CD8-positive, alpha-beta T cell (primary cell): ENCODE measurements at regions of chr10 and their contacts with region 1.

Region 1: GRCh38 chr10:14556285-14556956 is 218.3 kb downstream of the FAM107B start:
- DNase-seq: peak in 4 of 9 experiments; percentile 5 to 76 (median 56)
- ATAC-seq: peak; percentile 24
- H3K4me3 ChIP-seq: no peak overlapping the region
- H3K4me3 Mint-ChIP-seq: peak overlapping the region; percentile 27
- H3K27ac ChIP-seq: peak overlapping the region in 1 of 2 experiments; percentile 82
- H3K27ac Mint-ChIP-seq: peak overlapping the region; percentile 86
- H3K4me1 ChIP-seq: peaks cover 98% of the 10 kb centered on the region
- H3K4me1 Mint-ChIP-seq: peaks cover 93% of the 10 kb centered on the region
- H3K27me3 ChIP-seq: no peaks in the 10 kb centered on the region
- H3K27me3 Mint-ChIP-seq: no peaks in the 10 kb centered on the region
- CTCF ChIP-seq: no peak

Region 2: GRCh38 chr10:14459665-14460064 is 96.8 kb before region 1 on chr10:
- CTCF ChIA-PET with region 1: no interaction called
- POLR2A ChIA-PET with region 1: no interaction called
- intact Hi-C with region 1: no loop called
- DNase-seq: no peak
- ATAC-seq: no peak
- H3K4me3 ChIP-seq: no peak overlapping the region
- H3K4me3 Mint-ChIP-seq: no peak overlapping the region
- H3K27ac ChIP-seq: no peak overlapping the region
- H3K27ac Mint-ChIP-seq: no peak overlapping the region
- H3K4me1 ChIP-seq: no peaks in the 10 kb centered on the region
- H3K4me1 Mint-ChIP-seq: no peaks in the 10 kb centered on the region
- H3K27me3 ChIP-seq: peaks cover 0 to 2% of the 10 kb centered on the region in 2 experiments
- H3K27me3 Mint-ChIP-seq: peaks cover 8% of the 10 kb centered on the region
- CTCF ChIP-seq: no peak

Region 3: GRCh38 chr10:14507176-14507575 is 49.2 kb before region 1 on chr10:
- CTCF ChIA-PET with region 1: interaction called, 4 read pairs
- POLR2A ChIA-PET with region 1: no interaction called
- intact Hi-C with region 1: loop called in 1 of 2 experiments (anchors 5 kb)
- DNase-seq: peak in 7 of 9 experiments; percentile 14 to 89 (median 57)
- ATAC-seq: peak; percentile 88
- H3K4me3 ChIP-seq: no peak overlapping the region
- H3K4me3 Mint-ChIP-seq: peak overlapping the region; percentile 54
- H3K27ac ChIP-seq: peak overlapping the region; percentile 38 to 46
- H3K27ac Mint-ChIP-seq: peak overlapping the region; percentile 88
- H3K4me1 ChIP-seq: peaks cover 24% of the 10 kb centered on the region
- H3K4me1 Mint-ChIP-seq: peaks cover 37% of the 10 kb centered on the region
- H3K27me3 ChIP-seq: no peaks in the 10 kb centered on the region
- H3K27me3 Mint-ChIP-seq: no peaks in the 10 kb centered on the region
- CTCF ChIP-seq: no peak

Region 4: DNA sequence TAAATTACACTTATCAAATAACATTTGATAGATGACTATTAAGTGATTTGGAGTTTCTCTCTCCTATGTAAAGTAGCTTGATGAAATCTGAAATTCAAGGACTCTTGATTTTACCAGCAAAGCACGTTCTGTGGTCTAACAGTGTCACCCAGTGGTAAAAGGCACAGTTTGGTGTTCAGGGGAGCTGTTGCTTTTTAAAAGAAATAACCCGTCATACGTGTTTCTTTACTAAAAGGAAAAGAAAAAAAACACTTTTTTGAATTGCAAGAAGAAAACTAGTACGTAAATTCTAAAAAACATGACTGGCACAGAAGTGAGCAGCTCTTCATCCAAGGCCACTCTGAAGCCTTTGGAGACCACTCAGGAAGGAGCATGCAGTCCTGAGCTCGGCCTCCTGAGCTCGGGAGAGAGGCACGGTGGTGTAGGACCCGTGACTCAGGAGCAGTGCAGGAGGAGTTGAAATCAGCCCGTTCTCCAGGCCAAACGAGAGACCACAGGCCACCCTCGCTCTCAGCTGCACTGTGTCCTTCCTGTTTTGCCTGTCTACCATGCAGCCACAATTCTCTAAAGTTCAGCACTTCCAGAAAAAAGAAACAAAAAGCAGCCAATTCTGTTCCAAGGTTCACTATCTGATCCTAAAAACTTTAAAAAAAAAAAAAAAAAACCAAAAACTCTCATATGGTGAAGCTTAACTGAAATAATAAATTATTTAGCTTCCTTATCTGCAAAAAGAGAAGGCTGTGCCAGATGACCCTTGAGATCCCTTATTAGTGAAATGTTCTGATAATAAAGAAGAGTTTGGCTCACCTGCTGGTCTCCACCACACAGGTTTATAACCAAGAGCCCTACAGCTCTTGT is 13.1 kb before region 1 on chr10:
- CTCF ChIA-PET with region 1: interaction called, 29 read pairs
- POLR2A ChIA-PET with region 1: interaction called, 4 read pairs
- intact Hi-C with region 1: loop called in 1 of 2 experiments (anchors 1 kb)
- DNase-seq: peak in 6 of 9 experiments; percentile 47 to 82 (median 66)
- ATAC-seq: peak; percentile 84
- H3K4me3 ChIP-seq: peak overlapping the region; percentile 4 to 35
- H3K4me3 Mint-ChIP-seq: peak overlapping the region; percentile 75
- H3K27ac ChIP-seq: peak overlapping the region; percentile 68
- H3K27ac Mint-ChIP-seq: peak overlapping the region; percentile 95
- H3K4me1 ChIP-seq: peaks cover 62% of the 10 kb centered on the region
- H3K4me1 Mint-ChIP-seq: peaks cover 89% of the 10 kb centered on the region
- H3K27me3 ChIP-seq: no peaks in the 10 kb centered on the region
- H3K27me3 Mint-ChIP-seq: no peaks in the 10 kb centered on the region
- CTCF ChIP-seq: peak; percentile 76

Region 5: DNA sequence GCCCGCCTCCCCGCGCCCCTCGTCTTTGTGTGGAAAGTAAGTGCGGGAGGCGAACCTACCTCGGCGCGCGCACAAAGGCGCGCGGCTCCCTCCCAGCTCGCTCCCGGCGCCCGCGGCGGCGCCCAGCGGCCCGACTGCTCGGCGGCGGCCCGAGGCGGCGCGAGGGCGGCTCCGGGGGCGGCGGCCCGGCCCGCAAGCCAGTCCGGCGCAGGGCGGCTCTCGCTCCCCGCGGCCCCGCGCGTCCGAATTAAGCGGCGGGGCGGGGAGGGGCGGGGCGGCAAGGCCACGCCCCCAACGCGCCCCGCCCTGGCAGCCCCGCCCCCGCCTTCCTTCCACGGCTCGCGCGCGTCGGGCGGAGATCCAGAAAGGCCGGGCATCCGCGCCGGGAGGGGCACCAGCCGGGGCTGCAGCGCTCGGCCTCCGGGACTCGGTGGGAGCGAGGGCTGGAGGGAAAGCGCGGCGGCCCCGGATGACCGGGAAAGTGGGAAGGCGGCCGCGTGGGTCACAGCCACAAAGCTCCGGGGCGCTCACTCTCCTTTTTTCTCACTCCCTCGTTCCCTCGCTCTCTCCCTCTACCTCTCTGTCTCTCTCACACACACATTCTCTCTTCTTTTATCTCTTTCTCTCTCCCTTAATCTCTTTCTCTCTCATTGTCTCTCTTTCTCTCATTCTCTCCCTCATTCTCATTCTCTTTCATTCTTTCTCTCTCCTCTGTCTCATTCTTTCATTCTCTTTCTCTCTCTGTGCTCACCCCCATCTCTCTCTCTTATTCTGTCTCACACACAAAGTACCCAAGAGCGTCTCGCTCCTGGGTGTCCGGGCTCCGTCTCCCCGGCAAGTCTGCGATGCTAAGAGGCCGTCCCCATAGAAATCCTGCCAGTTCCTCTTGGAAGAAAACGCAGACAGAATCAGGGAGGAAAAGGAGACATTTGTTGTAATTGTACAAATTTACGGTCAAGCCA is 48.0 kb after region 1 on chr10:
- CTCF ChIA-PET with region 1: interaction called, 8 read pairs
- POLR2A ChIA-PET with region 1: interaction called, 3 read pairs
- intact Hi-C with region 1: loop called in 1 of 2 experiments (anchors 5 kb)
- DNase-seq: peak; percentile 39 to 86 (median 73)
- ATAC-seq: peak; percentile 71
- H3K4me3 ChIP-seq: peak overlapping the region; percentile 55 to 66
- H3K4me3 Mint-ChIP-seq: peak overlapping the region; percentile 93
- H3K27ac ChIP-seq: peak overlapping the region; percentile 48
- H3K27ac Mint-ChIP-seq: peak overlapping the region; percentile 94
- H3K4me1 ChIP-seq: peaks cover 44% of the 10 kb centered on the region
- H3K4me1 Mint-ChIP-seq: peaks cover 50% of the 10 kb centered on the region
- H3K27me3 ChIP-seq: no peaks in the 10 kb centered on the region
- H3K27me3 Mint-ChIP-seq: no peaks in the 10 kb centered on the region
- CTCF ChIP-seq: peak; percentile 16

Region 6: DNA sequence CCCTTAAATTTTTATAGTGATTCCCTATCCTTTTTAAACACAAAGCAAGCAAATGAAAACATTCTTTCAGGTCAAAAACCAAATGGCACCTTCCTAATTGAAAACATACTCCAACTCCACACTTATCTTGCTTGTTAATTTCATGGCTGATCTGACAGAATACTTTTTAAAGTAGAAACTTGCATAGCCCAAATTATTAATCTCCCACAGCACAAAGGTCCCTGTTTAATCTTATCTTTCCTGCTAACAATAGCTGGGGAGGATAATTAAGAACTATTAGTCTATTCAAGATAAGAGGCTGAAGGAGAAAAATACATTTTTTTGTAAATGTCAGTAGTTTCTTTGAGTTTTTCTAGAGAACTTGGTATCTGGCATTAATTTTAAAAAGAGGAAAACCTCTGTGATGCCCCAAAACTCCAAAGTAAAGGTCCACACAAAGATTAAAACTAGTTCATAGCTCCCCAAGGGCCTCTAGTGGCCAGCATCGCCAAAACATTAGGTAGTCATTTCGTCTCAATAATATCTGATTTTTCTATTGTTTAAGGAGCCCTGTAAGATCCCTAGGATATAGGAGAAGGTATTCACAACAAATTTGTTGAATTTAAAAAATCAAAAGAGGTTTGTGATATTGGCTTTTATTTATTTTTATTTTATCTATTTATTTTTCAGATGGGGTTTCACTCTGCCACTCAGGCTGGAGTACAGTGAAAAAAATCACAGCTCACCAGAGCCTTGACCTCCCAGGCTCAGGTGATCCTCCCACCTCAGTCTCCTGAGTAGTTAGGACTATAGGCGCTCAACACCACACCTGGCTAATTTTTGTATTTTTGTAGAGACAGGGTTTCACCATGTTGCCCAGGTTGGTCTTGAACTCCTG is 266.7 kb after region 1 on chr10:
- CTCF ChIA-PET with region 1: interaction called, 3 read pairs
- POLR2A ChIA-PET with region 1: no interaction called
- intact Hi-C with region 1: loop called in 1 of 2 experiments (anchors 5 kb)
- DNase-seq: peak in 8 of 9 experiments; percentile 6 to 63 (median 36)
- ATAC-seq: no peak
- H3K4me3 ChIP-seq: no peak overlapping the region
- H3K4me3 Mint-ChIP-seq: no peak overlapping the region
- H3K27ac ChIP-seq: no peak overlapping the region
- H3K27ac Mint-ChIP-seq: no peak overlapping the region
- H3K4me1 ChIP-seq: no peaks in the 10 kb centered on the region
- H3K4me1 Mint-ChIP-seq: peaks cover 2% of the 10 kb centered on the region
- H3K27me3 ChIP-seq: no peaks in the 10 kb centered on the region
- H3K27me3 Mint-ChIP-seq: no peaks in the 10 kb centered on the region
- CTCF ChIP-seq: peak; percentile 75